Calu3 (cell line): ENCODE measurements at regions of chr3 and their contacts with region 1.

Region 1: GRCh38 chr3:156691920-156692319 is 17.5 kb downstream of the TIPARP start:
- DNase-seq: no peak
- H3K4me3 Mint-ChIP-seq: peak overlapping the region; percentile 56
- H3K27ac Mint-ChIP-seq: peak overlapping the region; percentile 62
- H3K4me1 Mint-ChIP-seq: peaks cover 47% of the 10 kb centered on the region
- H3K27me3 Mint-ChIP-seq: no peaks in the 10 kb centered on the region
- CTCF ChIP-seq: no peak

Region 2: DNA sequence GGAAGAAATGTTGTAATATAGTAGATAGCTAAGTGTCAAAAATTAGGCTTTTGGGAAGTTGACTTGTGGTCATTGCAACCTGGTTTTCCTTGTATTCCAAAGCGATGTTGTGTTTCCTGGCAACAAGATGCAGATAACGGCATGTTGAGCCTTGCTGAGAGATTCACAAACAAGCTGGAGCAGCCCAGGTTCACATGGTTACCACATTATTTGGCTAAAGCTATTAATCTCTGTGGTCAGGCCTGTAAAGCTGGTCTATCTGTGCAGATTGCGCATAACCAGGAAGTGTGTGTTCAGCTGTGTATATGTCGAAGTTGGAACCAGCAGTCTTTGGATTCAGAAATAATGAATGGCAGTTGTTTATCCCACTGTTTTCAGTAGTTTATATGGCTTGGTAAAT is 10.9 kb before region 1 on chr3:
- CTCF ChIA-PET with region 1: interaction called, 4 read pairs
- intact Hi-C with region 1: loop called (anchors 1 kb)
- DNase-seq: peak; percentile 84
- H3K4me3 Mint-ChIP-seq: peak overlapping the region; percentile 7
- H3K27ac Mint-ChIP-seq: peak overlapping the region; percentile 88
- H3K4me1 Mint-ChIP-seq: peaks cover 73% of the 10 kb centered on the region
- H3K27me3 Mint-ChIP-seq: no peaks in the 10 kb centered on the region
- CTCF ChIP-seq: no peak